Natural killer cell (primary cell): ENCODE measurements at regions of chr16 and their contacts with region 1.

Region 1: DNA sequence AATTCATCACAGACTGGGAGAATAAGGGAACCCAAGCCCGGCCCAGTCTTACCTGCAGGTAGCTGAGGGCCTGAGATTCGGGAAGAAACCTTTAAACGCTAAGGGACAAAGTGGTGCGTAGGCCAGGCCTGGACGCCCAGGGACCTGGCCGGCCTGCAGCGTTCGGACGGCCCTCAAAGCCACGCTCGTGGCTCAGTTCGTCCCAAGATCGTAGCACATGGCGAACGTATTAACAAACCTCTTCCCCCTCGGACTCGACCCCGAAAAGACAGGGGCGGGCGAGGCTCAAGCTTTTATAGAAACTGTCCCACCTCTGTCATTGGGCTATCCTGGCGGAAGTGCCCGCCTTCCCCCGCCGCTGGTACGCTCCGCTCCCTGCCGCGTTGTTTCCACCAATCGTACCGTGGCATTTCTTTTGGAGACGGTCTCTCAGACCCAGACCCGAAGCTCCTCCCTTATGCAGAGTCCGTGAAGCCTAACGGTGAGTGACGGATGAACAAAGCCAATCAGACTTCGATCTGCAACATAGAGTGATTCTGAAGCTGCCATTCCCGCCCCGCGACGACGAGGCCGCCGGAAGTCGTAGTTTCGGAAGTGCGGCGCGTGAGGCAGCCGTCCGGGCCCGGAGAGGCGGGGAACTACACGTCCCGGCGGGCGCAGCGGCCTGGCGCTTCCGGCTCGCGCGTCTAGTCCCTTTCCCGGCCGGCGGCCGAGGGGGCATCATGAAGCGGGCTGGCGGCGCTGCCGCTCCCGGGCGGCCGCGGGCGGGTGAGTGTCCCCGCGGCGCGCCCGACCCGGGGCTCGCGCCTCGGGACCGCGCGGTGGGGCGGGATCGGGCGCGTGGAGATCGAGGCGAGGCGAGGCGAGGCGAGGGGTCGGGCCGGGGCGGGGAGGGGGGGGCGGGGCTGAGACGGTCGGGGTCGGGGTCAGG is at the start of gene TRAF7:
- DNase-seq: peak; percentile 94 to 100
- ATAC-seq: peak; percentile 90 to 98 (median 91)
- H3K4me3 ChIP-seq: peak within 1 kb of the TSS; percentile 61
- H3K4me3 Mint-ChIP-seq: peak within 1 kb of the TSS; percentile 97
- H3K27ac ChIP-seq: peak within 1 kb of the TSS; percentile 57
- H3K27ac Mint-ChIP-seq: peak within 1 kb of the TSS; percentile 87
- H3K4me1 ChIP-seq: peaks cover 68% of the 10 kb centered on the region
- H3K4me1 Mint-ChIP-seq: peaks cover 30 to 61% of the 10 kb centered on the region in 2 donors
- H3K27me3 ChIP-seq: no peaks in the 10 kb centered on the region
- H3K27me3 Mint-ChIP-seq: no peaks in the 10 kb centered on the region
- CTCF ChIP-seq: no peak
- total RNA-seq, gene TRAF7: 29.3 to 39.1 (median 37.3) TPM

Region 2: GRCh38 chr16:1772736-1773584 is 382.4 kb before region 1 on chr16 and contains the starts of genes EME2 and MRPS34:
- intact Hi-C with region 1: loop called (anchors 5 kb)
- DNase-seq: peak; percentile 79 to 89
- ATAC-seq: peak; percentile 65 to 80 (median 66)
- H3K4me3 ChIP-seq: peak within 1 kb of the TSS; percentile 61
- H3K4me3 Mint-ChIP-seq: peak within 1 kb of the TSS; percentile 97
- H3K27ac ChIP-seq: peak within 1 kb of the TSS; percentile 54
- H3K27ac Mint-ChIP-seq: peak within 1 kb of the TSS; percentile 87 to 88
- H3K4me1 ChIP-seq: peaks cover 41% of the 10 kb centered on the region
- H3K4me1 Mint-ChIP-seq: peaks cover 14 to 21% of the 10 kb centered on the region in 2 donors
- H3K27me3 ChIP-seq: no peaks in the 10 kb centered on the region
- H3K27me3 Mint-ChIP-seq: no peaks in the 10 kb centered on the region
- CTCF ChIP-seq: peak; percentile 92
- total RNA-seq, gene EME2: 30.0 to 33.8 (median 30.1) TPM
- total RNA-seq, gene MRPS34: 26.5 to 42.0 (median 41.4) TPM

Region 3: DNA sequence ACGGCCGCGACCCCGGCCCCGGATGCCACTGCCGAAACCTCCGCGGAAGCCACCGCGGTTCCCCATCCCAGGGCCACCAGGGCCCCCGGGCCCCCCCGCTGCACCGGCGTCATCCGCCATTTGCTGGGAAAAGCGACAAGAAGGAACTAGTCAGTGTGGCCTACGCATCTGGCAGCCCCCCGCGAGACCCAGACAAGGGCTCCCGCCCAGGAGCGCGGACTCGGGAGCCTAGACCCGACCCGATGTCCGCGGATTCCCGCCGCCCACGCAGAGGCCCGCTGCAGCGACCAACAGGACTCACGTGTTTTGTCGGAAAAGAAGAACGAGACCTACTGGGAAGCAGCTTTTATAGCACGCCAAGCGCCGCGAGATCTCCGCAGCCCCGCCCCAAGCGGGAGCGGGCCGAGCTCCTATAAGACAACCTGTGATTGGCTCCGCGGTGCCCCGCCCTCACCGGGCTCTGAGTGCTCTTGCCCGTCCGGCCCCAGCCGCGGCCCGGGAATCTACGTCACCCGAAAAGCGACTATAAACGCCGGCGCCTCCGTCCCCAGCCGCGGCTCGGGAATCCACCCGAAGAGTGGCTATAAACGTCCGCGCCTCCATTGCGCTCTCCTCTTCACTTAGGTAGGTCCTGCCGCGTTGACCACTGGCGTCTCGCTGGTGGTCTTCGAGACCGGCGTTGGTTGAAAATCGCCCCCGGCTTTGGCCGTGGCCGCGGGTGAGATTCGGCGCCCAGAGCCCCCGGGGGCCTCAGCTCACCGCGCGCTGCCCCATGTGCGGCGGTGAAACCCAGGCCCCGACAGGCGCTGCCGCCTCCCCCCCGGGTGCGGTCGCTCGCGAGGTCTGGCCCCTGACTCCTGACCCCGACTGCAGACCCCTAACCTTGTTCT is 190.6 kb before region 1 on chr16 and contains the start of gene RPS2:
- intact Hi-C with region 1: no loop called
- DNase-seq: peak; percentile 99
- ATAC-seq: peak; percentile 93 to 99 (median 94)
- H3K4me3 ChIP-seq: peak within 1 kb of the TSS; percentile 88
- H3K4me3 Mint-ChIP-seq: peak within 1 kb of the TSS; percentile 94
- H3K27ac ChIP-seq: peak within 1 kb of the TSS; percentile 99
- H3K27ac Mint-ChIP-seq: peak within 1 kb of the TSS; percentile 95
- H3K4me1 ChIP-seq: peaks cover 50% of the 10 kb centered on the region
- H3K4me1 Mint-ChIP-seq: peaks cover 37 to 41% of the 10 kb centered on the region in 2 donors
- H3K27me3 ChIP-seq: no peaks in the 10 kb centered on the region
- H3K27me3 Mint-ChIP-seq: no peaks in the 10 kb centered on the region
- CTCF ChIP-seq: no peak
- total RNA-seq, gene RPS2: 1,124 to 1,385 (median 1,274) TPM

Region 4: GRCh38 chr16:2047330-2048115 is 107.8 kb before region 1 on chr16 and contains the starts of genes NTHL1 and TSC2:
- intact Hi-C with region 1: loop called (anchors 1 kb)
- DNase-seq: peak; percentile 92 to 96
- ATAC-seq: peak; percentile 95 to 99 (median 99)
- H3K4me3 ChIP-seq: peak within 1 kb of the TSS; percentile 71
- H3K4me3 Mint-ChIP-seq: peak within 1 kb of the TSS; percentile 93
- H3K27ac ChIP-seq: no peak within 1 kb of the TSS
- H3K27ac Mint-ChIP-seq: peak within 1 kb of the TSS; percentile 61 to 73
- H3K4me1 ChIP-seq: peaks cover 35% of the 10 kb centered on the region
- H3K4me1 Mint-ChIP-seq: peaks cover 14 to 28% of the 10 kb centered on the region in 2 donors
- H3K27me3 ChIP-seq: no peaks in the 10 kb centered on the region
- H3K27me3 Mint-ChIP-seq: no peaks in the 10 kb centered on the region
- CTCF ChIP-seq: peak; percentile 41
- total RNA-seq, gene NTHL1: 8.7 to 12.9 (median 9.7) TPM
- total RNA-seq, gene TSC2: 135 to 197 (median 161) TPM

Region 5: GRCh38 chr16:2213817-2214720 is 58.7 kb after region 1 on chr16:
- intact Hi-C with region 1: loop called (anchors 10 kb)
- DNase-seq: no peak
- ATAC-seq: peak in 1 of 3 donors; percentile 1
- H3K4me3 ChIP-seq: peak overlapping the region; percentile 10
- H3K4me3 Mint-ChIP-seq: peak overlapping the region; percentile 80
- H3K27ac ChIP-seq: no peak overlapping the region
- H3K27ac Mint-ChIP-seq: peak overlapping the region in 1 of 2 donors; percentile 87
- H3K4me1 ChIP-seq: peaks cover 31% of the 10 kb centered on the region
- H3K4me1 Mint-ChIP-seq: peaks cover 0 to 16% of the 10 kb centered on the region in 2 donors
- H3K27me3 ChIP-seq: no peaks in the 10 kb centered on the region
- H3K27me3 Mint-ChIP-seq: no peaks in the 10 kb centered on the region
- CTCF ChIP-seq: no peak